AG04449 (cell line): ENCODE measurements at regions of chr19 and their contacts with region 1.

Region 1: DNA sequence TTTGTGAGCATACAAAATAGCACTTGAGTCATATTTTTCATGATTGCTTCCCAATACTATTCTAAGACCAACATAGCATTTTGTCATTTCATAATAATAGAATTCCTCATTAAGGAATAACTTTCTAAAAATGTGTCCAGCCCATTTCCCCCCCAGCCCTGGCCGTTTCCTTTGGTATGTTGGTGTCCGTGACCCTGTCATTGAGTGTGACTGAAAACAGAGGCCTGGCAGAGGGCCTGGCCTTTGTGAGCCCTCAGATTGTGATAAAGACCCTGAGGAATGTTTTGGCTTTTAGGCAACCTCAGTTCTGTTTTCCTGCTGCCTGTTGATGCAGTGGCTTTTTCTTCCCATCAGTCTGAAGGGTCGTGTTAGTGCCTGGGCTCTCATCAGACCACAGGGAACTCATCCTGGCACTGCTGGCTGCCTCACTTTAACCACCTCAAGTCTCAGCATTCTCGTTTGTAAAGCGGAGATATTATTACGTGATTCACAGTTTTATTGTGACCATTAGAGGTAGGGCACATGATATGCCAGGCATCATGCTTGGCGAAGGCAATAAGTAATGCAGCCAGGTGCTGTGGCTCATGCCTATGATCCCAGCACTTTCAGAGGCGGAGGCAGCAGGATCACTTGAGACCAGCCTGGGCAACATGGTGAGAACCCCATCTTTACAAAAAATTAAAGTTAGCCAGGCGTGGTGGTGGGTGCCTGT is 13.8 kb downstream of the SPINT2 start:
- DNase-seq: no peak
- H3K4me3 ChIP-seq: no peak overlapping the region
- CTCF ChIP-seq: no peak

Region 2: GRCh38 chr19:38263689-38264485 is 14.2 kb before region 1 on chr19:
- CTCF ChIA-PET with region 1: interaction called, 10 read pairs
- POLR2A ChIA-PET with region 1: no interaction called
- DNase-seq: no peak
- H3K4me3 ChIP-seq: peak overlapping the region; percentile 52
- CTCF ChIP-seq: no peak

Region 3: DNA sequence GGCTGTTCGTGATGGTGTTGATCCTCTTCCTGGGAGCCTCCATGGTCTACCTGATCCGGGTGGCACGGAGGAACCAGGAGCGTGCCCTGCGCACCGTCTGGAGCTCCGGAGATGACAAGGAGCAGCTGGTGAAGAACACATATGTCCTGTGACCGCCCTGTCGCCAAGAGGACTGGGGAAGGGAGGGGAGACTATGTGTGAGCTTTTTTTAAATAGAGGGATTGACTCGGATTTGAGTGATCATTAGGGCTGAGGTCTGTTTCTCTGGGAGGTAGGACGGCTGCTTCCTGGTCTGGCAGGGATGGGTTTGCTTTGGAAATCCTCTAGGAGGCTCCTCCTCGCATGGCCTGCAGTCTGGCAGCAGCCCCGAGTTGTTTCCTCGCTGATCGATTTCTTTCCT is 13.7 kb after region 1 on chr19:
- CTCF ChIA-PET with region 1: no interaction called
- POLR2A ChIA-PET with region 1: no interaction called
- DNase-seq: no peak
- H3K4me3 ChIP-seq: no peak overlapping the region
- CTCF ChIP-seq: no peak

Region 4: GRCh38 chr19:38303517-38304349 is 25.6 kb after region 1 on chr19 and contains the start of gene C19orf33:
- CTCF ChIA-PET with region 1: no interaction called
- POLR2A ChIA-PET with region 1: no interaction called
- DNase-seq: no peak
- H3K4me3 ChIP-seq: no peak within 1 kb of the TSS
- CTCF ChIP-seq: no peak